ENCODE measurements at regions of chr17 and their contacts with region 1.

Region 1: GRCh38 chr17:31740611-31741082 is 118.4 kb downstream of the COPRS start:
- DNase-seq: no peak
- H3K4me3 ChIP-seq: no peak overlapping the region
- H3K27ac ChIP-seq: peak overlapping the region in 1 of 2 donors; percentile 24
- H3K4me1 ChIP-seq: peaks cover 21% of the 10 kb centered on the region
- H3K27me3 ChIP-seq: no peaks in the 10 kb centered on the region
- CTCF ChIP-seq: no peak
- POLR2A ChIP-seq: no peak

Region 2: GRCh38 chr17:31558748-31559644 is 181.7 kb before region 1 on chr17:
- intact Hi-C with region 1: loop called (anchors 5 kb)
- DNase-seq: peak; percentile 68
- H3K4me3 ChIP-seq: peak overlapping the region; percentile 56 to 74
- H3K27ac ChIP-seq: peak overlapping the region; percentile 91 to 92
- H3K4me1 ChIP-seq: peaks cover 14% of the 10 kb centered on the region
- H3K27me3 ChIP-seq: no peaks in the 10 kb centered on the region
- CTCF ChIP-seq: peak; percentile 87 to 97 (median 97)
- POLR2A ChIP-seq: peak; percentile 48

Region 3: GRCh38 chr17:31581022-31581490 is 159.6 kb before region 1 on chr17:
- intact Hi-C with region 1: loop called (anchors 5 kb)
- DNase-seq: peak; percentile 85
- H3K4me3 ChIP-seq: no peak overlapping the region
- H3K27ac ChIP-seq: peak overlapping the region; percentile 68 to 77
- H3K4me1 ChIP-seq: peaks cover 10% of the 10 kb centered on the region
- H3K27me3 ChIP-seq: no peaks in the 10 kb centered on the region
- CTCF ChIP-seq: no peak
- POLR2A ChIP-seq: no peak

Region 4: GRCh38 chr17:31629696-31630470 is 110.8 kb before region 1 on chr17:
- intact Hi-C with region 1: no loop called
- DNase-seq: no peak
- H3K4me3 ChIP-seq: no peak overlapping the region
- H3K27ac ChIP-seq: no peak overlapping the region
- H3K4me1 ChIP-seq: no peaks in the 10 kb centered on the region
- H3K27me3 ChIP-seq: no peaks in the 10 kb centered on the region
- CTCF ChIP-seq: no peak
- POLR2A ChIP-seq: no peak

Region 5: DNA sequence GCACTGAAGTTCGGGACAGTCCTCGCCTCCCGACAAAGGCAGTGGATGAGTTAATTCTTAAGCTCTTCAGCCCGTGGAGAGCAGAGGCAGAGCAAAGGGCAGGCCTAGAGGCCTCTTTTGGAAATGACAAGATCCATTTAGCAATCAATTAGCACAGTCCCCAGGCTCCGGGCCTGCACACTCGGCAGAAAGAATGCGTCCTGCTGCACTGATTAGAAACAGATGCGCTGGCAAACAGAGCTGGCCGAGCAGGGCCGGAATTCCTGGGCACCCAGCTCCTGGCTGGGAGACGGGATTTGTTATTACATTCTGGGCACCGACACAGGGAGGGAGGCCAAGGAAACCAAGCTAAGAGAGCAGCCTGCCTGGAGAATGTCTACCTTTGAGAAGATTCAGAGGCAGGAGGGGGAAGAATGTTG is 44.5 kb before region 1 on chr17:
- intact Hi-C with region 1: loop called (anchors 2 kb)
- DNase-seq: peak; percentile 89
- H3K4me3 ChIP-seq: no peak overlapping the region
- H3K27ac ChIP-seq: peak overlapping the region; percentile 43
- H3K4me1 ChIP-seq: peaks cover 7% of the 10 kb centered on the region
- H3K27me3 ChIP-seq: no peaks in the 10 kb centered on the region
- CTCF ChIP-seq: no peak
- POLR2A ChIP-seq: no peak

Region 6: GRCh38 chr17:31842183-31843069 is 101.8 kb after region 1 on chr17:
- intact Hi-C with region 1: loop called (anchors 5 kb)
- DNase-seq: peak; percentile 75
- H3K4me3 ChIP-seq: peak overlapping the region in 1 of 2 donors; percentile 10
- H3K27ac ChIP-seq: peak overlapping the region; percentile 65 to 71
- H3K4me1 ChIP-seq: peaks cover 6% of the 10 kb centered on the region
- H3K27me3 ChIP-seq: no peaks in the 10 kb centered on the region
- CTCF ChIP-seq: peak; percentile 95 to 98 (median 96)
- POLR2A ChIP-seq: no peak

Measured in prostate gland (tissue), 2 donors.